Activated CD4-positive, alpha-beta T cell treated with anti-CD3 and anti-CD28 coated beads for 36 hours (primary cell): ENCODE measurements at regions of chr1 and their contacts with region 1.

Region 1: DNA sequence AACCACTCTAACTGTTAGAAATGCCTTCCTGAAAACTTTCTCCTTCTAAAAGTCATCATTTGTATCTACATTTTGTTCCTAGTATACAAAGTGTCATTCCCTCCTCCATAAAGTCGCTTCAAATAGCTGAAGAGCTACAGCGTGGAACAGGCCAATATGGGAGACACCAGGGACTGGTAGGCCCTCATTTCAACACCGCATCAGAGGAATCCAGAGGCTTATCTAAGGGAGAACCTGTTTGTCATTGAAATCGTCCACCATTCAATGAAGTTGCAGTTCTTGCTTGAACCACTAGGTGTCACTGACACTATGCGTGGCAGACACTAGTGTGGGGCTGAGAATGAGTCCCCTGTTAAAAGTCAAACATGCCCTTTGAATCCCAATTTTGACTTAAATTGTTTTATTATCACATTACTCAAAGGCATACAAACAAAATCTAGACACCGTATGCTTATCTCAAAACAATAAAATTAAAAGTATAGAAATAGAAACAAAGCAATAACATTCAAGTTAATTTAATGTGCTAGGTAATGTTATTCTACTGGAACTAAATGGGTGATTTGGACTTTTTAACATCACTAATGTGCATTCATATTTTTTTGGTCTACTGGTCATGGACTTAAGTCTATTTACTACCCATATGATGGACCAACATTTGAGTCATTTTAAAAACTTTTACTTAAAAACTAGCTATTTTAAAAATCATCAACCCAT is 182.3 kb downstream of the FCRL5 start:
- DNase-seq: peak; percentile 54
- ATAC-seq: peak; percentile 64
- H3K4me3 Mint-ChIP-seq: no peak overlapping the region
- H3K27ac Mint-ChIP-seq: no peak overlapping the region
- H3K4me1 Mint-ChIP-seq: no peaks in the 10 kb centered on the region
- H3K27me3 Mint-ChIP-seq: peaks cover 4% of the 10 kb centered on the region

Region 2: DNA sequence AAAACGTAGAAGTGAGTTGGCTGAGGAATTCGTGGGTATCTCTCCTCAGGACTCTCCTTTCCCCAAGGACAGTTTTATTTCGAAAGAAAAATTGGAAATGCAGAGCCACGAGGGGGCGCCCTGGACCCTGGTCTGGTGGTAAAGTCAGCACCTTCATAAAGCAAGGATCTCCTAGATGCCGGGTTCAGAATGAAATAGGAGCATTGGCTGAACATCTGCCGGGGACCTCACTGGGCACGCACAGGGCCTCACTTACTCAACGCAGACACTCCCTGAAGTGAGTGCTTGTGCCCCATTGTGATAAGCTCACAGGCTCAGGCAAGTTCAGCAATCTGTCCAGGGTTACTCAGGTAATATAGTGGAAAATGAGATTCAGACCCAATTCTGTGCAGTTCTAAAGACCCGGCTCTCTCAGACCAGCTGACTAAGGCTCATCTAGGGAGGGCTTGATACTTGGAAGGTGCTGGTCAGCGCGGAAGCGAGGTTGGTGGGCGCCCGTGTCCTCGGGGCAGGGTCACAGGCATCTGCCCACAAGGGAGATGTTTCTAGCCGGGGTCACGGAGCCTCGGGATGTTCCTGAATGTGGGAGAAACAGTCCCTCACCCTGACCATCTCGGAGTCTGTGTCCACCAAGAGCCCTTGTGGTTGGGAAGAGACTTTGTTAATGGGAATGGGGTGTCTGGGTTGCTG is 176.1 kb before region 1 on chr1:
- CTCF ChIA-PET with region 1: interaction called, 3 read pairs
- POLR2A ChIA-PET with region 1: no interaction called
- intact Hi-C with region 1: loop called (anchors 2 to 10 kb)
- DNase-seq: peak; percentile 83
- ATAC-seq: peak; percentile 59
- H3K4me3 Mint-ChIP-seq: no peak overlapping the region
- H3K27ac Mint-ChIP-seq: no peak overlapping the region
- H3K4me1 Mint-ChIP-seq: no peaks in the 10 kb centered on the region
- H3K27me3 Mint-ChIP-seq: peaks cover 30% of the 10 kb centered on the region

Region 3: DNA sequence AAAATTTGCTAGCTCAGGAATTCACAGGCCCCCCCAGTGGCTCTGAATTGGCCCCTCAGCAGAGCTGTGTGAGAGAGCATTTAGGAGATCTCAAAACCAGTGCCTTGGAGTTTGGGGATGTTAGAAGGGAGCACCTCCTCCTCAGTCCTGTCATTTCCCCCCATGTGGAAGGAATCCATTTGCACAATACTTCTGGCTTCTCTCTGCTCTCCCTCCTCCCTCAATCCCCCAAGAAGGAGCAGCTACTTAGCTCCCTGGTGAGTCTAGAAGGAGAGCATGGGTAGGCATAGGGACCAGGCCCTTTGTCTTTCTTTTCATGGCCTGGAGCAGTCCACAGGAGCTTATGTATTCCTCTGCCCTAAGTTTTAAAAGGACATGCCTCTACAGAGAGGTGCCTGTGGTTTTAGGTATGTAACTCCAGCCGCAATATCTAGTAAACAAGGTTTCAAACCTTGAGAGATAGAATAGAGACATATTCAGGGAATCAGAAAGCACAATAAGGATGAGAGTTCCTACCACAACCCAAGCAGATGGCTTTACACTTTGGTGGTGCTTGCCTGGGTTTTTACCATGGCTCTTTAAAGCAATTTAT is 17.1 kb before region 1 on chr1:
- CTCF ChIA-PET with region 1: interaction called, 13 read pairs
- POLR2A ChIA-PET with region 1: no interaction called
- intact Hi-C with region 1: no loop called
- DNase-seq: no peak
- ATAC-seq: no peak
- H3K4me3 Mint-ChIP-seq: no peak overlapping the region
- H3K27ac Mint-ChIP-seq: no peak overlapping the region
- H3K4me1 Mint-ChIP-seq: no peaks in the 10 kb centered on the region
- H3K27me3 Mint-ChIP-seq: peaks cover 21% of the 10 kb centered on the region

Region 4: GRCh38 chr1:157496121-157496526 is 126.2 kb after region 1 on chr1:
- CTCF ChIA-PET with region 1: interaction called, 10 read pairs
- POLR2A ChIA-PET with region 1: no interaction called
- intact Hi-C with region 1: no loop called
- DNase-seq: peak; percentile 55
- ATAC-seq: peak; percentile 63
- H3K4me3 Mint-ChIP-seq: no peak overlapping the region
- H3K27ac Mint-ChIP-seq: no peak overlapping the region
- H3K4me1 Mint-ChIP-seq: no peaks in the 10 kb centered on the region
- H3K27me3 Mint-ChIP-seq: peaks cover 21% of the 10 kb centered on the region

Region 5: DNA sequence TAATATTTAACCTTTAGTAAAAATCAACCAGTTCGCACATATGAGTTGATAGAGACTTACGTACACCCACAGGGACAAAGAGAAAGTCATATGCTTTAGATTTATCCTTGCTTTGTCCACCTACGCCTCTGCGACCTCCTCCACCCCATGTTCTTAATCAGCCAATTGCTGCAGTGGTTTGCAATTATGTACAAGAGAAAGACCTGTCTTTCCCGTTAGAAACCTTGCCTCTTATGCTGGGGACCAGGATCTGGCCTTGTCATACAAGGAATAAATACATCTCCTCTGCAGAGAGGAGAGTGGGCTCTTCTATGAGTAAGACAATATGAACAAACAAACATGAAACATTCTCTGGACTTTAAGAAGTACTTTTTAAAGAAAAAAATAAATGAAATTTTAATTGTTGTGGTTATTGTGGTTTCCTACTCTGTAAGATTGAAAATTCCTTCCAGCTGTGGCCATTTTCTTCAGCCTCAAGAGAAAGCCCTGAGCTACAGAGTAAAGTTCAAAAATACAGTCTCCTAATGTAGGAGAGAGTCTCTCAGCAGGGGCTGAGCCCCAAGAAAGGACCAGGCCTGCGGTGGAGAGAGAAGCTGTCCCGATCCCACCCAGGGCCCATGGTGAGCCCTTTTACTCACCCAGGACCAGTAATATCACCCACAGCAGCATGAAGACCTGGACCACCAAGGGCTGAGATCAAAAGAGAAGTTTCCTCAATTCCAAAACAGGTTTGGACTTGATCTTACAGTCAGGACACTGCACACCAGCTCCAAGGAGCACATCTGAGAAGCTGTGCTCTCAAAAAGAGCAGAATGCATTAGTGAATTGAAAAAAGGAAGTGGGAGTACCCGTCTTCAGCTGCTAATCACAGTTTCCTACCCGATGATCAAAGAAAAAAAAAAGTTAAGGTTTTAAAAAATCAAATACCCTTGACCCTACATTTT is 182.0 kb after region 1 on chr1 and contains the start of gene FCRL5:
- CTCF ChIA-PET with region 1: no interaction called
- POLR2A ChIA-PET with region 1: no interaction called
- intact Hi-C with region 1: no loop called
- DNase-seq: no peak
- ATAC-seq: no peak
- H3K4me3 Mint-ChIP-seq: no peak within 1 kb of the TSS
- H3K27ac Mint-ChIP-seq: no peak within 1 kb of the TSS
- H3K4me1 Mint-ChIP-seq: peaks cover 3% of the 10 kb centered on the region
- H3K27me3 Mint-ChIP-seq: peaks cover 4% of the 10 kb centered on the region
- total RNA-seq, gene FCRL5: not detected

Region 6: DNA sequence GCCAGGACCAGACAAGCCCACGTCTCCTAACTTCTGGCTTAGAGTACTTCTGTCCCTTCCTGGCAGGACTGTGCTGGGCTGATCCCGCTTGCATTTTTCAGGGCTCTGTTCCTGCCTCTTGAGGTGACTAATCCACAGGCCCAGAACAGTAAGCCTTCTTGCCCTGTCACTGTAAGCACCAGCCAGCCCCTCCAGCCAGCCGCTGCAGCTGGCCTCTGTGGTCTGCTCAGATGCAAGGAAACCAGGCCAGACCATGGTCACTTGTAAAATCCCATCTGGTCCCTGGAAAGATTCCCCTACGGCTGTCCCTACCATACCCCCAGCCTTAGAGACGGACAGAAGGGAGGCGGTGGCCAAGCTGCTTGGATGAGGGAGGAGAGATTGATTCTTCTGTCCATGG is 697.7 kb after region 1 on chr1:
- CTCF ChIA-PET with region 1: no interaction called
- POLR2A ChIA-PET with region 1: no interaction called
- intact Hi-C with region 1: no loop called
- DNase-seq: no peak
- ATAC-seq: no peak
- H3K4me3 Mint-ChIP-seq: no peak overlapping the region
- H3K27ac Mint-ChIP-seq: no peak overlapping the region
- H3K4me1 Mint-ChIP-seq: no peaks in the 10 kb centered on the region
- H3K27me3 Mint-ChIP-seq: peaks cover 12% of the 10 kb centered on the region